AG04449 (cell line): ENCODE measurements at regions of chr14 and their contacts with region 1.

Region 1: DNA sequence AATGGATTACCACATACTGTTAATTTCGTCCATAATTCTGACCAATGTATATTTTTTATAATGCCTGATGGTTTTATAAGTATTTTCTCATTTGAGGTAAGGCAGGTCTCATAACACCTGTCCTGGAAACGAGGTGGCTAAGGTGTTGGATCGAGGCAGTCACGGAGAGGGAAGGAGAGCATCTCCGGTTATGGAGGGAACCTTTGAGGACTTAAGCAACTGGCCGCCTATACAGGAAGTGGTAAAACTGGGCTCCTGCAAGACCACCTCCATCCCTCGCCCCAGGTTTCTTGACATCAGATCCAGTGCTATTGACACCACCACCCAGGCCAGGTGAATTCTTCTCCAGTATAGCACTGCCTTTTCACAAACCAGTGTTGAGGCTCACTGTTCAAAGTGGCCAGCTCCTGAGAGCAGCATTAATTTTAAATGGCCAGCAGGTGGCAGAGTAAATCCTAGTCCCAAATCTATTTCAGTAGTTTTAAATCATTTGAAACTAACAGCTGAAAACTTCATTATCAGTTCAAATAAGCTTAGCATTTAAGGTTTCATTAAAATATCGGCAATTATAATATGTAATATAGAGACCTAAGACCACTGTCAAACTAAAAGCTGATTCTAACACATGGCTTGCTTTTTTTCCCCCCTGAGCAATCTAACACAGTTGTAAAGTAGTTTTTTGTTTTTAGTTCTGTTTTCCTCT is 100.8 kb downstream of the PPM1A start:
- DNase-seq: peak; percentile 1
- H3K4me3 ChIP-seq: no peak overlapping the region
- CTCF ChIP-seq: peak; percentile 34

Region 2: GRCh38 chr14:60242429-60242828 is 107.4 kb before region 1 on chr14:
- CTCF ChIA-PET with region 1: no interaction called
- POLR2A ChIA-PET with region 1: no interaction called
- DNase-seq: no peak
- H3K4me3 ChIP-seq: no peak overlapping the region
- CTCF ChIP-seq: no peak

Region 3: GRCh38 chr14:60331201-60332045 is 18.4 kb before region 1 on chr14:
- CTCF ChIA-PET with region 1: interaction called, 23 read pairs
- POLR2A ChIA-PET with region 1: no interaction called
- DNase-seq: no peak
- H3K4me3 ChIP-seq: peak overlapping the region; percentile 42
- CTCF ChIP-seq: peak; percentile 58

Region 4: DNA sequence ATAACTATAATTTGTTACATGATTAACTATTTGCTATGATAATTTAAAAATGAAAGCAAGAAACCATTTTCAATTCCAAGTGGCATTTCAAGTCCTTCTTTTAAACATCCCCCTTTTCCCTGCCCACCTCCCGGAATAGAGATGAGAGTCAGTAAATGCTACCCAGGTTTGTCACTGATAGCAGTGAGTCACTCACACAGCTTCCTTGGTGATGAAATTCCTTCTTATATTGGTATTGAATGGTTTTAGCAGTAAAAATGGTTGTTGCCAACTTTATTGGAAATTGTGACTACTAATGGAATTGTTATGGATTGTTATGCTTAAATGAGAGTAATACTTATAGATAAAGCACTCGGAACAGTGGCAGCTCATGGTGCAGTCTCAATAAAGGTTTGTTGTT is 10.2 kb before region 1 on chr14:
- CTCF ChIA-PET with region 1: interaction called, 14 read pairs
- POLR2A ChIA-PET with region 1: no interaction called
- DNase-seq: no peak
- H3K4me3 ChIP-seq: no peak overlapping the region
- CTCF ChIP-seq: no peak

Region 5: GRCh38 chr14:60561845-60562746 is 212.3 kb after region 1 on chr14:
- CTCF ChIA-PET with region 1: interaction called, 162 read pairs
- POLR2A ChIA-PET with region 1: no interaction called
- DNase-seq: no peak
- H3K4me3 ChIP-seq: no peak overlapping the region
- CTCF ChIP-seq: peak; percentile 72

Region 6: DNA sequence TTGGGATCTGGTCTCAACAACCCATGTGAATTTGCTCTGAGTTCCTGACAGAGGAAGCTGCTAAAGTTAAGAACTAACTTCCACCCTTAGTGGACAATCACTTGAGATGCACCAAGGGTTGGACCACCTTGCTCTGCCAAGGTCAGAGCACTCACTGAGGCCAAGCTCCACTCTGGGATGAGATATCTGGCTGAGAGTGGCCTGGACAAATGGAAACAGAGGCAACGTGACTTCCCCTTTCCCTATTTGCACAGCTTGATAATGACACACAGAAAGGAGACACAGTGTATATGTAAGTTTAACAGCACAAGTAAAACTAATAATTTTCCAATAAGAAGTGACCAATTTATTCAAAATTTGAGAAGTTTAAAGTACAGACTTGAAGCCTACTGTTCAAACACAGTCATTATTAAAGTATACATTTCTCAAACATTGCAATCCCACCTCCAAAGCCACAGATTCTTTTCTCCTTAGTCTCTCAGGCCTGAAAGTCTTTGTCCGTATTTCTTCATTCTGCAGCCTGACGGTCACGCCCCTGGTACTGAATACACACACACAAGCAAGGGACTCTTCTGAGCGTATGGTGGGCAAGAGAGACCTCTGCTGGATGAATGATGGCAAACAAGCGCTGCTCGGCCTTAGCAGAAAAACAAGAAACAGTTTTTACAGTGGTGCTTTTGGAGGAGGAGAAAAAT is 902.7 kb after region 1 on chr14:
- CTCF ChIA-PET with region 1: interaction called, 24 read pairs
- POLR2A ChIA-PET with region 1: no interaction called
- DNase-seq: peak; percentile 95
- H3K4me3 ChIP-seq: no peak overlapping the region
- CTCF ChIP-seq: peak; percentile 73

Region 7: GRCh38 chr14:61280526-61281185 is 930.8 kb after region 1 on chr14:
- CTCF ChIA-PET with region 1: interaction called, 97 read pairs
- POLR2A ChIA-PET with region 1: no interaction called
- DNase-seq: no peak
- H3K4me3 ChIP-seq: peak overlapping the region; percentile 45
- CTCF ChIP-seq: peak; percentile 45